HEK293T (cell line): ENCODE measurements at regions of chr13 and their contacts with region 1.

Region 1: GRCh38 chr13:44435142-44435982 is 61.7 kb downstream of the SERP2 start:
- DNase-seq: peak; percentile 89

Region 2: GRCh38 chr13:44141725-44142539 is 293.4 kb before region 1 on chr13:
- CTCF ChIA-PET with region 1: interaction called, 4 read pairs
- POLR2A ChIA-PET with region 1: interaction called, 24 read pairs
- DNase-seq: peak; percentile 99

Region 3: DNA sequence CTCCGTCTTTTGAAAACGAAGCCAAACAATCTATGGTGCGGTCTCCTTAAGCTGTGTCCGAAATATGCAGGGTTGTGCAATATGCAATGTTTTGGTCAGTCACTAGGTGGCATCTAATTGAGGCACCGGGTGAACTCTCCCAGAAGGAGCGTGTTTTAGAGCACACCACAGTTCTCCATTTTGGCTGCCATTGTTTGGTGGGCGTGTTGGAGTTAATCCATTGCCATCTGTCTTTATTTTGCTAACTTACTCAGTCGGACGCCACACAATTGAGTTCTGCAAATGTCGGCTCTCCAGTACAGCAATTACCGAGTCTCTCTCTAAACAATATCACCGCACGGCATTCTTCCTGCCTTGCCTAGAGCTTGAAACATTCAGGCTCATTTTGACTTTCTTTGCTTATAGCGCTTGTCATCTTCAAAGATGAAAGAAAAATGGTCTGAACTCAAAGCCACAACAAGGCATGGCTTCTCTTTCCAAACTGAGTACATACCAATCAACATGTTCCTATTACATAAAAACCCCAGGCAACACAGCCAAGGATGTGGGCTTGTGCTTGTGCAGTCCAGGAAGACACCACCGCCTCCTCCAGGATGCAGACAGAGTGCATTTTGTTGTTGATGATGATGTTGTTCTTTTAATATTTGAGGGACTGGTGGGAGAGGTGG is 243.7 kb before region 1 on chr13:
- CTCF ChIA-PET with region 1: interaction called, 3 read pairs
- POLR2A ChIA-PET with region 1: interaction called, 29 read pairs
- DNase-seq: peak; percentile 82

Region 4: DNA sequence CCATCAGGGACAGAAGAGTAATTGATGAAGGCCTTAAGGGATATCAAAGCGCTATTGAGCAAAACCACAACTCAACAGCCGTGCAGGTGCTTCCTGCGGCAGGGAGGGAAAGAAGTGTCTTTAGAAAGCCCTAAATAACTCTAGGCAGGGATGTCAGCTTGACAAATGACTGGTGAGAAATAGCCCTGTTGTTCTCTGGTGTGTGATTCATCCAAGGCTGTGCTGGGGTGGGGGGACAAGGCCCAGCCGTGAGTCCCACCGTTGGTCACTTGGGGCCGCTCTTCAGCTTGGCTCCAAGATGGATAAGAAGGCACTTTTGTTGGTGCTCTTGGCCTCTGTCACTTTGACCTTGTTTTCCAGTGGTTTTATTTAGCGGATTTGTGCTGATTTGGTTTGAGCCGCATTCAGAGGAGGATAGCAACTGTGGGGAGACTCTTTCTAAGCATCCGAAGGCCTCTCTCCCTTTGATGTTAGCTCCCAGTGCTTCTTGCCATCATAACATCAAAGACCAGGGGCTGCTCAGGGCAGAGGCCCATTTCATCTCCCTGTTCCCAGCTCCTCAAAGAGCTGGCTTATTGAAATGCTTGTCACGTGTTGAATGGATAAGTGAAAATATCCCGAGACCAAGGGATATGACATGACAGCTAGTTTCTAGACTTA is 192.0 kb before region 1 on chr13:
- CTCF ChIA-PET with region 1: interaction called, 9 read pairs
- POLR2A ChIA-PET with region 1: interaction called, 13 read pairs
- DNase-seq: no peak

Region 5: GRCh38 chr13:44396701-44397580 is 38.4 kb before region 1 on chr13:
- CTCF ChIA-PET with region 1: no interaction called
- POLR2A ChIA-PET with region 1: interaction called, 17 read pairs
- DNase-seq: no peak

Region 6: GRCh38 chr13:44449999-44450708 is 14.8 kb after region 1 on chr13:
- CTCF ChIA-PET with region 1: no interaction called
- POLR2A ChIA-PET with region 1: no interaction called
- DNase-seq: no peak